Activated CD4-positive, alpha-beta memory T cell treated with anti-CD3 and anti-CD28 coated beads for 36 hours (primary cell): ENCODE measurements at regions of chr16 and their contacts with region 1.

Region 1: DNA sequence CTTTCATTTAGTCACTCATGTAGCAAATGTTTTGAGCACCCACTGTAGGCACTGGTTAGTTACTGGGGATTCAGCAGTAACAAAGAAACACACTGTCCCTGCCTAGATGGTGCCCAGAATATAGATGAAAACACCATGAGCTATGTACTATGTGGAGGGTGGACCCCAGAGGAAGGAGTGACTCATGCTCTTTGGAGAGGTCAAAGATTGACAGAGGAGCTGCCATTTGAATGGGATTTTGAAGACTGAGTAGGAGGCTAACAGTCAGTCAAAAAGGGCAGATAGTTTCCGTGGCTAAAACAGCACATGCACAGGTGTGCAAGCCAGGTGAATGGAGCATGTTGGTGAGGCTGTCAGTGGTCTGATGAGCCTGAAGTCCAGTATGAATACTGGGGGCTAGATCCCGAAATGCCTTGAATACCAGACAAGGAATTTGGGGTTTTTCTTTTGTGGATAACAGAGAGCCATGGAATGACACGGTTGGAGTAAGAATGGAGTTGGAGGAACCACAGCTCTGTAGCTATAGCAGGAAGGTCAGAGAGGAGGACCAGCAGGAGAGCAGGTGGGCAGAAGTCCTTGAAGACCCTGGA is 6.1 kb downstream of the IL21R start:
- DNase-seq: peak; percentile 73
- H3K4me3 Mint-ChIP-seq: peak overlapping the region; percentile 100
- H3K27ac Mint-ChIP-seq: peak overlapping the region; percentile 96
- H3K4me1 Mint-ChIP-seq: peaks cover 71% of the 10 kb centered on the region
- H3K27me3 Mint-ChIP-seq: no peaks in the 10 kb centered on the region

Region 2: DNA sequence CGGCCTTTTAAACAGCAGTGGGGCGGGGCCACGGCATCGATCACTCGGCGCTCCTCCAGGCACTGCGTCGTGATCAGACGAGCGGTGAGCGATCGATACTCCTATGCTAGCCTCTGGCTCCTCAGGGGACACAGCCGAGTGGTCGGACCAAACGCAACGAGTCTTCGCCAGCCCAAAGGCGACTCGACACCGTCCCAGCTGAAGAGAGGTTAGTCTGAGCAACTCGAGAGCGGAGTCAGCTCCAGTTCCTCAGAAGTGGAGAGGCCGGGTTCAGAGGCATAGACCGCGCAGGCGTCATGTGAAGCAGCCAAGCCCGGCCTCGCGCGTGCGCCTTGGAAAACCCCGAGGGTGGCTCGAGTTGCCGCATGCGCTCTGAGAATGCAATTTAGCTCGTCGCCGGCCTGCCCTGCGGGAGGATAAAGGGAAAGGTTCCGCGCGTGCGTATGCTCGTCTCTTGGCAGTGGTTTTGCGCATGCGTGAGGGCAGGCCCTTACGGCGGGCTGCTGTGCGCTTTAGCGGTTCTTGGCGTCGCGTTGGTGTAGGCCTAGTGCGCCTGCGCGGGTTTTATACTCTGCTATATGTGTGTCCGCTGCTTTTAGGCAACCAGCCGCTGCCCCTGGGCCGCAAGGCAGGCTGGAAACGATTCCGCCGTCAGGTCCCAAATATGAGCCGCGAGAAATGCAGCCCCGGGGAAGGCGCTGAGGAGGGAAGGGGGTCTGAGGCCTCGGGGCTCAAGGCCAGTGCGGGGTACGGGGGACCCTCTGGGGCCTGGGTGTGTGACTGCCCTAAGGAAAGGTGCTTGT is 204.5 kb before region 1 on chr16 and contains the start of gene KDM8:
- CTCF ChIA-PET with region 1: no interaction called
- POLR2A ChIA-PET with region 1: interaction called, 3 read pairs
- intact Hi-C with region 1: loop called (anchors 1 kb)
- DNase-seq: peak; percentile 100
- H3K4me3 Mint-ChIP-seq: peak within 1 kb of the TSS; percentile 95
- H3K27ac Mint-ChIP-seq: peak within 1 kb of the TSS; percentile 97
- H3K4me1 Mint-ChIP-seq: peaks cover 47% of the 10 kb centered on the region
- H3K27me3 Mint-ChIP-seq: no peaks in the 10 kb centered on the region
- total RNA-seq, gene KDM8: 8.7 to 9.7 TPM

Region 3: GRCh38 chr16:27253526-27253930 is 154.6 kb before region 1 on chr16:
- CTCF ChIA-PET with region 1: no interaction called
- POLR2A ChIA-PET with region 1: no interaction called
- intact Hi-C with region 1: loop called (anchors 5 kb)
- DNase-seq: no peak
- H3K4me3 Mint-ChIP-seq: peak overlapping the region; percentile 47
- H3K27ac Mint-ChIP-seq: peak overlapping the region; percentile 90
- H3K4me1 Mint-ChIP-seq: peaks cover 86% of the 10 kb centered on the region
- H3K27me3 Mint-ChIP-seq: no peaks in the 10 kb centered on the region

Region 4: DNA sequence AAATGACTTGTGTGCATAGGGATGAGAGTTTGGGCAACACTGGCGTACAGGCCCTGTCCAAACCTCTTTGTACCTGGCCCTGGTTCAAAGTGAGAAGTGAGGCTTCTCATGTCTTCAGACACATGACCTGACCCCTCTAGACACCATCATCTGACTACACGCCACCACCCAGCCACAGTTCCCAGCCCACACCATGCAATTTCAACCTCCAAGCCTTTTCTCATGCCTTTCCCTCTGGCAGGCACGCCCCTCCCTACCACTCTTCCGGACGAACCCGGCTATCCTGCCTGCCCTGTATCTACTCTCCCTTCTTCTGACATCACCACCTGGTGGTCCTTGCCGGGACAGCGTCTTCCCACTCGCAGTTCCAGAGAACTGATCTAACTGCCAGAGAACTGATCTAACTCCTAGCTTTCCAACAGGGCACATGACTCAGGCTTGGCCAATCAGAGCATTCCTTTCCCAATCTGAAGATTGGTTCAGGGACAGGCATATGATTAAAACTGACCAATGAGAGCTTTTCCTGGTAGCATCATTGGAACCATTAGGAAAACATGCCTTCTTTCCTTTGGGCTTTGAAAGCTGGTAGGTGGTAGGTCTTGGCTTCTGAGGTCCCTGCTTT is 33.2 kb before region 1 on chr16:
- CTCF ChIA-PET with region 1: interaction called, 75 read pairs
- POLR2A ChIA-PET with region 1: interaction called, 20 read pairs
- intact Hi-C with region 1: loop called (anchors 2 kb)
- DNase-seq: peak; percentile 83
- H3K4me3 Mint-ChIP-seq: no peak overlapping the region
- H3K27ac Mint-ChIP-seq: no peak overlapping the region
- H3K4me1 Mint-ChIP-seq: peaks cover 36% of the 10 kb centered on the region
- H3K27me3 Mint-ChIP-seq: no peaks in the 10 kb centered on the region

Region 5: DNA sequence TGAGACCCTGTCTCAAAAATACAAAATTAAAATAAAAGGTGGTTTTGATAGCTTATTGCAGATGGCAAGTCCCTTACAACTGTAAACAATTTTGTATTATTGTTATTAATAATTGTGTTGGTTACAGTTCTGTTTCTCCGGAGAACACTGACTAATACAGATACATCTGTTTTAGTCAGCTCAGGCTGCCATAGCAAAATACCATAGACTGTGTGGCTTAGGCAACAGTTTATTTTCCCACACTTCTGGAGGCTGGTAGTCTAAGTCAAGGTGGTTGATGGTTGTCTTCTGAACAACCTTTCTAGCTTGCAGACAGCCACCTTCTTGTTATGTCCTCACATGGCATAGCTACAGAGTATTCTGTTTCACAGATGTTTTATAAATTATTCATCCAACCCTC is 20.4 kb before region 1 on chr16:
- CTCF ChIA-PET with region 1: interaction called, 6 read pairs
- POLR2A ChIA-PET with region 1: interaction called, 34 read pairs
- intact Hi-C with region 1: loop called (anchors 2 kb)
- DNase-seq: no peak
- H3K4me3 Mint-ChIP-seq: no peak overlapping the region
- H3K27ac Mint-ChIP-seq: peak overlapping the region; percentile 39
- H3K4me1 Mint-ChIP-seq: peaks cover 18% of the 10 kb centered on the region
- H3K27me3 Mint-ChIP-seq: no peaks in the 10 kb centered on the region

Region 6: DNA sequence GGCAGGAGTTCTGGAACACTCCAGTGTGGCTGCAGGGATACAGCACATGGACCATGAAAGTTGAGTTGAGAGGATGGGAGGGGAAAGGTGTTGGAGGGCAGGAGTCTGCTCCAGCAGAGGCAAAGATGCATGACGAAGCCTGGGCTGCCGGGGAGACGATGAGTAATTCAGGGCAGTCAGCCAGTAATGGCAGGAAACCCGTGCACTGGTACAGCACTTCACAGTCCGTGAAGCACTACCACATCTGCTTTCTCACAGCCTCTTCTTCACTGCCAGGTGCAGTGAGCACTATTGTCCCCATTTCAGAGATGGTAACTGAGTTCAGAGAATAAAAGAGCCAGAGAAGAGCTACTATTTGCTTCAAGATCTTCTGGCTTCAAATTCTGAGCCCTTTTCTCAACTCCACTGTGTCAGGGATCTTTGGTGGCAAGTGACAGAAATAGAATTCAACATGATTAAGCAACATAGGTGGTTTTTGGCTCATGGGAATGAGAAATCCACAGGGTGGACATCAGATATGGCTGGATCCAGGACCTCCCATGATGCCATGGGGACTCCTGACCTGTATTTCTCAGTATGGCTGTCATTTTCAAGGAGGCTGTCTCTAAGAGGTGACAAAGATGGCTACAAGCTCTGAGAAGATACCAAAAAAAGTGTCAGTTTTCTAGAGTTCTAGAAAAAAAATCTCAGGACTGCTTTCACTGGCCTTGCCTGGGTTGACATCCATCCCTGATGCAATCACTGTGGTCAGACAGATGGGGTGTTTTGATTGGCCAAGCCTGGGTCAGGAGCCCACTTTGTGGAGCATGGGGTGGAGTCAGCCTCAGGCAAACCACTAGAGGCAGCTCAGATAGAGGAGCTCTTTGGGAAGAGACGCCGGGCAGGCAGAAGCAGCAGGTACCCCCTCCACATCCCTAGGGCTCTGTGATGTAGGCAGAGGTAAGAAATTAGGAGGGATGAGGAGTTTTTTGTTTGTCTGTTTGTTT is 18.6 kb after region 1 on chr16:
- CTCF ChIA-PET with region 1: interaction called, 4 read pairs
- POLR2A ChIA-PET with region 1: interaction called, 6 read pairs
- intact Hi-C with region 1: loop called (anchors 1 kb)
- DNase-seq: peak; percentile 91
- H3K4me3 Mint-ChIP-seq: peak overlapping the region; percentile 45
- H3K27ac Mint-ChIP-seq: peak overlapping the region; percentile 87
- H3K4me1 Mint-ChIP-seq: peaks cover 76% of the 10 kb centered on the region
- H3K27me3 Mint-ChIP-seq: no peaks in the 10 kb centered on the region